A673 (cell line): ENCODE measurements at regions of chr12 and their contacts with region 1.

Region 1: GRCh38 chr12:67355578-67356379 is 86.6 kb downstream of the CAND1 start:
- DNase-seq: peak; percentile 73
- H3K4me3 ChIP-seq: no peak overlapping the region
- H3K27ac ChIP-seq: no peak overlapping the region
- H3K4me1 ChIP-seq: peaks cover 16% of the 10 kb centered on the region
- H3K27me3 ChIP-seq: peaks cover 18% of the 10 kb centered on the region
- CTCF ChIP-seq: peak; percentile 73

Region 2: GRCh38 chr12:67441736-67442346 is 86.1 kb after region 1 on chr12:
- CTCF ChIA-PET with region 1: interaction called, 24 read pairs
- POLR2A ChIA-PET with region 1: no interaction called
- intact Hi-C with region 1: loop called (anchors 1 kb)
- DNase-seq: peak; percentile 82
- H3K4me3 ChIP-seq: no peak overlapping the region
- H3K27ac ChIP-seq: no peak overlapping the region
- H3K4me1 ChIP-seq: no peaks in the 10 kb centered on the region
- H3K27me3 ChIP-seq: no peaks in the 10 kb centered on the region
- CTCF ChIP-seq: peak; percentile 91

Region 3: DNA sequence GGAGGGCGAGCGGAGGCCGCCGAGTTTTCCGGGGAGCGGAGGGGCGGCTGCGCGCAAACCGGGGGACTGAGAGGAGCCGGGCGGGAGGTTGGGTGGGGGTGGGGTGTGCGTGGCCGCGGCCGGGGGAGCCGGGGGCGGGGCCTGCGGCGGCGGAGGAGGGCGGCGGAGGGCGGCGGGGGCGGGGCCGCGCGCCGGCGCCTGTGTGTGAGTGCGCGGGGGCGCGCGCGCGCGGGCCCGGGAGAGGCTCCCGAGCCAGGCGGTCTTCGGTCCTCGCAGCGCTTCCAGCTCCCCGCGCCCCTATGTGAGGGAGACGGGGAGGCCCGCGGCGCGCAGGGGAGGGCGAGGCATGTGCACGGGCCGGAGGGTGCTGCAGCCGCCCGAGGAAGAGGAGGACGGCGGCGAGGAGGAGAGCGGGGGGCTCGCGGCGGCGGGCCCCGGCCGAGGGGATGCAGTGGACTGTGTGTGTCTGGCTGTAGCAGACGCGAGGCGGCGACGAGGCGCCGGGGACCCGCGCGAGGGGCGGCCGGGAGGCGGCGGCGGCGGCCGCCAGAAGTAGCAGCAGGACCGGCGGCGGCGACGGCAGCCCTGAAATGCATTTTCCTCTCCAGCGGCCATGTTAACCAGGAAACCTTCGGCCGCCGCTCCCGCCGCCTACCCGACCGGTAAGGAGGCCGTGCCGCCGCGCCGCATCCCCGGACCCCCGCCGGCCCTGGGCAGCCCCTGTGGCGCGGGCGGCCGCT is 292.9 kb after region 1 on chr12 and contains the start of gene DYRK2:
- CTCF ChIA-PET with region 1: interaction called, 11 read pairs
- POLR2A ChIA-PET with region 1: no interaction called
- intact Hi-C with region 1: no loop called
- DNase-seq: peak; percentile 87
- H3K4me3 ChIP-seq: peak within 1 kb of the TSS; percentile 96
- H3K27ac ChIP-seq: peak within 1 kb of the TSS; percentile 90
- H3K4me1 ChIP-seq: peaks cover 19% of the 10 kb centered on the region
- H3K27me3 ChIP-seq: no peaks in the 10 kb centered on the region
- CTCF ChIP-seq: no peak
- total RNA-seq, gene DYRK2: 28.6 and 35.2 TPM in 2 replicates

Region 4: DNA sequence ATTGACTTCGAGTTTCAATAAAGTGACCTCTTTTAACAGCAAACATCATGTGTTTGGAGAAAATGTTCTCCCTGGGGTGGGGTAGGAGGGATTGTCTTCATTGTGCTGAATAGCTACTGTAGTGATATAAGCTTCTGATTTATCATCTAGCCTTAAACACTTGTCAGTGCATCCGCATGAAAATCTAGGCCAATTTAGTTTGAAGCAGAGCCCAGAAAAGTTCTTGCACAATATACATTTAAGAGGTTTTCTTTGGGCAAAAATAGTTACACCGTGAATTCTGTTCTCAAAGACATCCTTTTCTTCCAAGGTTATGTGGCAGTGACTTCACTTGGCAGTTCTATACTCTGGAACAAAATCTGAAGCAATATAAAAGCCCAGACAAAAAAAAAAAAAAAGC is 497.4 kb after region 1 on chr12:
- CTCF ChIA-PET with region 1: interaction called, 11 read pairs
- POLR2A ChIA-PET with region 1: no interaction called
- intact Hi-C with region 1: no loop called
- DNase-seq: no peak
- H3K4me3 ChIP-seq: no peak overlapping the region
- H3K27ac ChIP-seq: no peak overlapping the region
- H3K4me1 ChIP-seq: no peaks in the 10 kb centered on the region
- H3K27me3 ChIP-seq: no peaks in the 10 kb centered on the region
- CTCF ChIP-seq: no peak

Region 5: DNA sequence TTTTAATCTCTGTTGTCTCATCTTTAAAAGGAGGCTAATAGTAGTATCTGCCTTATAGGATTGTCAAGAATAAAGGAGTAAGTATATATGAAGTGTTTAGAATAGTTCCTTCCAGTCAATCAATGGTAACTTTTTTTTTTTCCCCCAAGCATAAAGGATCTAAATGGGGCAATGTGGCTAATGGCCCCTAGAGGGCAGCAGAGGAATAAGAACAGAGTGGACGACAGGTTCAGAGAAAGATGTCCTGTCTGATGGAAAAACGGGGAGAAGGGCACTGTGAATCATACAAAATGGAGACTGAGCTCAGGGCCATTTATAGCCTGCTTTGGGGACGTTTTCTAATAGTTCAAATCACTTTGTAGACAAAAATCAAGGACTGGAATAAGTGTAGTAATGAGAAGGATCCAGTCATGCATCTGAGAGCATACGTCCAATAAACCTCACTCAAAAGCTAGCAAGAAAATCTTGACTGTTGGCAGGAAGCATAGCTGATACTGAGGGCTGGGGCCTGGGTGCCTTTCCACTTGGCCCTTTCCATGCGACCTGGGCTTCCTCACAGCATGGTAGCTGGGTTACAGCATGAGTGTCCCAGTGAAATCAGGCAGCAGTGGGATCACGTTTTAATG is 684.8 kb after region 1 on chr12:
- CTCF ChIA-PET with region 1: no interaction called
- POLR2A ChIA-PET with region 1: no interaction called
- intact Hi-C with region 1: loop called (anchors 5 kb)
- DNase-seq: peak; percentile 78
- H3K4me3 ChIP-seq: no peak overlapping the region
- H3K27ac ChIP-seq: no peak overlapping the region
- H3K4me1 ChIP-seq: no peaks in the 10 kb centered on the region
- H3K27me3 ChIP-seq: no peaks in the 10 kb centered on the region
- CTCF ChIP-seq: peak; percentile 92